GM12878 (cell line): ENCODE measurements at regions of chr2 and their contacts with region 1.

Region 1: DNA sequence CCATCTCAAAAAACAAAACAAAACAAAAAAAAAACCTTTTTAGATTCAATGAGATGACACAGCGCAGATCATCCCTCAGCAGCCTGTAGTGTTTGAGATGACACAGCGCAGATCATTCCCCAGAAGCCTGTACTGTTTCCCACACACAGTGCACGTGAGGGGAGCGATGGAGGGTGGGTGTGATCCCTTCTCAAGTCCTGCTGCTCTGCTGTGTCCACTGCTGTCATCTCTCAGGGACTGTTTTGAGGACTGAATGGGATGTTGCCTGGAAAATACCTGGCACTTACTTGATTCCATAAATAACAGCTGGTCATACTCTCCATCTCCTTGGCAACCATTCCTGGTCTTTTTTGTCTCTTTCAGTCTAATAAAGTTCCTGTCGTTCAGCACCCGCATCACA is 25.7 kb downstream of the TGOLN2 start:
- DNase-seq: no peak
- ATAC-seq: no peak
- H3K4me3 ChIP-seq: no peak overlapping the region
- H3K27ac ChIP-seq: no peak overlapping the region
- H3K4me1 ChIP-seq: no peaks in the 10 kb centered on the region
- H3K27me3 ChIP-seq: peaks cover 0 to 2% of the 10 kb centered on the region in 2 experiments; a peak in 2 of 4 replicates
- CTCF ChIP-seq: no peak
- EP300 ChIP-seq: no peak
- POLR2A ChIP-seq: no peak
- RAD21 ChIP-seq: no peak

Region 2: GRCh38 chr2:85066874-85067351 is 235.2 kb before region 1 on chr2:
- CTCF ChIA-PET with region 1: interaction called, 13 read pairs
- POLR2A ChIA-PET with region 1: no interaction called
- RAD21 ChIA-PET with region 1: interaction called, 14 read pairs
- SMC1A ChIA-PET with region 1: interaction called, 4 read pairs
- in situ Hi-C with region 1: no loop called
- intact Hi-C with region 1: loop called (anchors 1 kb)
- DNase-seq: no peak
- ATAC-seq: peak; percentile 90
- H3K4me3 ChIP-seq: no peak overlapping the region
- H3K27ac ChIP-seq: no peak overlapping the region
- H3K4me1 ChIP-seq: no peaks in the 10 kb centered on the region
- H3K27me3 ChIP-seq: no peaks in the 10 kb centered on the region; a peak in 1 of 4 replicates
- CTCF ChIP-seq: peak; percentile 65 to 68 (median 66)
- EP300 ChIP-seq: no peak
- POLR2A ChIP-seq: no peak
- RAD21 ChIP-seq: peak; percentile 72

Region 3: DNA sequence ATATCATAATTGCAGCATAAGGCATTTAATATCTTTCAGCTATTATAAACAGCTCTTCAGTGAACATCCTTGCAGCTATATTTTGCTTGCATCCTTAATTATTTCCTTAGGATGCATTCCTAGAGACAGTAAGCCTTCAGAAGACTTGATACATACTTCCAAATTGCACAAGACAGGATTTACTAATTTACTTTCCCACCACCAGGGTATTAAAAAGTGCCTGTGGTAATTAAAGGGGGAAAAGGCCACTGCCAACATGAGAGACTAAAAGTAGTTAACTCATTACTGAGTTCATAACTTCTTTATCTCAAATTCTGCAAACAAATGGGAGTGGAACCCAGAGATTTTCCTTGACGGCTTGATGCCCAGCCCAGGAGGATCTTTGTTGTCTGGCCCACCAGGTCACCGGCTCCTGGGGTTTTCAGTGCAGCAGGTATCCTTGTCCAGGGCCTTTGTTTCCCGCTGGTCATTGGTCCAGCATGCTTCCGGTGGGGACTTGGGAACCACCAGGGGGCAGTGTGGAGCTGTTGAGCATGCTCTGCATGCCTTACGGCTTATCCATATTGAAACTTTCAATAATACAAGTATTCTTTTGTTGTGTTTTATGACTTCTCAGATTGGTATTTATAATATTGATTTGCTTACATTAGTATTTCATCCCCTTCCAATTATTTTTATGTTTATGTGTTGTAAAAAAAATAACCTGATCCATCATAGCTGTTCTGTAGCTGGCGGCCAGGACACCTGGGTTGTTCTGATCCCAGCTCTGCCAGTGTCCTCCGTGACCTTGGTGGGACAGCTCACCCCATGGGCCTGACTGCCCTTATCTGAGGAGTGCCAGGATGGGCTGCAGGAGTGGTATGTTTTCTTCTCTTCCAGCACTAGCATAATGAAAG is 35.7 kb before region 1 on chr2:
- CTCF ChIA-PET with region 1: interaction called, 83 read pairs
- POLR2A ChIA-PET with region 1: no interaction called
- RAD21 ChIA-PET with region 1: interaction called, 4 read pairs
- SMC1A ChIA-PET with region 1: interaction called, 18 read pairs
- in situ Hi-C with region 1: no loop called
- intact Hi-C with region 1: loop called (anchors 1 kb)
- DNase-seq: no peak
- ATAC-seq: peak; percentile 98
- H3K4me3 ChIP-seq: no peak overlapping the region
- H3K27ac ChIP-seq: no peak overlapping the region
- H3K4me1 ChIP-seq: no peaks in the 10 kb centered on the region
- H3K27me3 ChIP-seq: peaks cover 1 to 4% of the 10 kb centered on the region in 2 experiments; a peak in 1 of 4 replicates
- CTCF ChIP-seq: peak; percentile 81 to 86 (median 84)
- EP300 ChIP-seq: no peak
- POLR2A ChIP-seq: no peak
- RAD21 ChIP-seq: peak; percentile 51

Region 4: GRCh38 chr2:85288244-85288725 is 13.8 kb before region 1 on chr2:
- CTCF ChIA-PET with region 1: interaction called, 33 read pairs
- POLR2A ChIA-PET with region 1: no interaction called
- RAD21 ChIA-PET with region 1: interaction called, 5 read pairs
- SMC1A ChIA-PET with region 1: interaction called, 4 read pairs
- in situ Hi-C with region 1: no loop called
- intact Hi-C with region 1: no loop called
- DNase-seq: no peak
- ATAC-seq: no peak
- H3K4me3 ChIP-seq: no peak overlapping the region
- H3K27ac ChIP-seq: no peak overlapping the region
- H3K4me1 ChIP-seq: no peaks in the 10 kb centered on the region; the same call in 1 of the 2 replicates
- H3K27me3 ChIP-seq: no peaks in the 10 kb centered on the region; a peak in 1 of 4 replicates
- CTCF ChIP-seq: no peak
- EP300 ChIP-seq: no peak
- POLR2A ChIP-seq: no peak
- RAD21 ChIP-seq: no peak

Region 5: DNA sequence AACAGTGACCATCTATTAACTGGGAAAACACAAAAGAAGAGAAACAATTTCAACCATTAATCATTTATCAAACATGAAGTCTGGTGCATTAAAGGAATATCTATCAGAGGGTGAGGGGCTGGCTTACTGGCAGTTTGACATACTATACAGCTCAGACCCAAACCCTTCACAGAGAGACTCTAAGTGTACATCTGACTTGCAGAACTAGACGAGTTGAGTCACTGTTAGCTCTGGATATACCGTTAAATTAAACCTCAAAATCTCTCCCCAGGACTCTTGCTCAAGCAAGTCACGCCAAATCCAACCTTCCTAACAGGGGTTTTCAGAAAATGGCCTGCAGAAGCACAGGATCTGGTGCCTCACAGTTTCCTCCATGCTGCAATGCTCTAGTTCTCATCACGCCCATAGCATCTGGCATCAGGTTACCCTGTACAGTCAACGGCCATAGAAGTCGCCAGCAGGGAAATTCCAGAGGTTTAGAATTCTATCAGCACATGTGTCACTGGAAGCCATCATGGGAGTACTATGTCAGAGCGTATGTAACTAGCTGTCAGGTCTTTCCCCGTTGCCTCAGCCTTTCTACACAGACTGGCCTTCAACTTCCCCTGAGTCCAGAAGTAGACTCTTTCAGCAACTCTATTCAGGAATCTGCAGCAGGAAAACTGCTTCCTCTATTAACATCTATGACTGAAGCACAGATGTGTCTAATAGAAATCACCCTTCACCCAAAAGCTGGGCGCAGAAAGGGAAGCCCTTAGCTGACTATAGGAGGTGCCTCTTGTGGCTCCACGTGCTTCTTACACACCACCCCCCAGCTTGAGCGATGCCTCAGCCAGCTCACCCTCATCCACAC is 16.3 kb after region 1 on chr2:
- CTCF ChIA-PET with region 1: interaction called, 39 read pairs
- POLR2A ChIA-PET with region 1: no interaction called
- RAD21 ChIA-PET with region 1: no interaction called
- SMC1A ChIA-PET with region 1: interaction called, 3 read pairs
- in situ Hi-C with region 1: no loop called
- intact Hi-C with region 1: no loop called
- DNase-seq: no peak
- ATAC-seq: peak; percentile 72
- H3K4me3 ChIP-seq: no peak overlapping the region
- H3K27ac ChIP-seq: no peak overlapping the region; the same call in 1 of the 2 replicates
- H3K4me1 ChIP-seq: no peaks in the 10 kb centered on the region; the same call in 1 of the 2 replicates
- H3K27me3 ChIP-seq: no peaks in the 10 kb centered on the region
- CTCF ChIP-seq: no peak
- EP300 ChIP-seq: no peak
- POLR2A ChIP-seq: no peak
- RAD21 ChIP-seq: no peak

Region 6: GRCh38 chr2:85327822-85328617 is 25.9 kb after region 1 on chr2 and contains the start of gene TGOLN2:
- CTCF ChIA-PET with region 1: interaction called, 17 read pairs
- POLR2A ChIA-PET with region 1: no interaction called
- RAD21 ChIA-PET with region 1: interaction called, 3 read pairs
- SMC1A ChIA-PET with region 1: interaction called, 5 read pairs
- in situ Hi-C with region 1: no loop called
- intact Hi-C with region 1: no loop called
- DNase-seq: peak; percentile 73
- ATAC-seq: peak; percentile 90
- H3K4me3 ChIP-seq: peak within 1 kb of the TSS; percentile 98
- H3K27ac ChIP-seq: peak within 1 kb of the TSS; percentile 99
- H3K4me1 ChIP-seq: peaks cover 20% of the 10 kb centered on the region
- H3K27me3 ChIP-seq: no peaks in the 10 kb centered on the region
- CTCF ChIP-seq: no peak
- EP300 ChIP-seq: peak in 1 of 2 experiments; percentile 13; a peak in 1 of 4 replicates
- POLR2A ChIP-seq: peak; percentile 98
- RAD21 ChIP-seq: no peak
- polyA plus RNA-seq, gene TGOLN2: 13.8 to 21.6 TPM

Region 7: GRCh38 chr2:85551698-85552678 is 249.9 kb after region 1 on chr2:
- CTCF ChIA-PET with region 1: interaction called, 17 read pairs
- POLR2A ChIA-PET with region 1: no interaction called
- RAD21 ChIA-PET with region 1: interaction called, 3 read pairs
- SMC1A ChIA-PET with region 1: interaction called, 3 read pairs
- in situ Hi-C with region 1: no loop called
- intact Hi-C with region 1: loop called (anchors 5 kb)
- DNase-seq: peak; percentile 56
- ATAC-seq: peak; percentile 91
- H3K4me3 ChIP-seq: no peak overlapping the region
- H3K27ac ChIP-seq: no peak overlapping the region
- H3K4me1 ChIP-seq: no peaks in the 10 kb centered on the region
- H3K27me3 ChIP-seq: no peaks in the 10 kb centered on the region
- CTCF ChIP-seq: peak; percentile 84 to 93 (median 92)
- EP300 ChIP-seq: no peak
- POLR2A ChIP-seq: no peak
- RAD21 ChIP-seq: peak; percentile 95